Activated CD8-positive, alpha-beta memory T cell treated with anti-CD3 and anti-CD28 coated beads, Interleukin-2, amount 10 ng/mL, durations not matched to agents 7 days and 5 days (primary cell): ENCODE measurements at regions of chr9 and their contacts with region 1.

Region 1: DNA sequence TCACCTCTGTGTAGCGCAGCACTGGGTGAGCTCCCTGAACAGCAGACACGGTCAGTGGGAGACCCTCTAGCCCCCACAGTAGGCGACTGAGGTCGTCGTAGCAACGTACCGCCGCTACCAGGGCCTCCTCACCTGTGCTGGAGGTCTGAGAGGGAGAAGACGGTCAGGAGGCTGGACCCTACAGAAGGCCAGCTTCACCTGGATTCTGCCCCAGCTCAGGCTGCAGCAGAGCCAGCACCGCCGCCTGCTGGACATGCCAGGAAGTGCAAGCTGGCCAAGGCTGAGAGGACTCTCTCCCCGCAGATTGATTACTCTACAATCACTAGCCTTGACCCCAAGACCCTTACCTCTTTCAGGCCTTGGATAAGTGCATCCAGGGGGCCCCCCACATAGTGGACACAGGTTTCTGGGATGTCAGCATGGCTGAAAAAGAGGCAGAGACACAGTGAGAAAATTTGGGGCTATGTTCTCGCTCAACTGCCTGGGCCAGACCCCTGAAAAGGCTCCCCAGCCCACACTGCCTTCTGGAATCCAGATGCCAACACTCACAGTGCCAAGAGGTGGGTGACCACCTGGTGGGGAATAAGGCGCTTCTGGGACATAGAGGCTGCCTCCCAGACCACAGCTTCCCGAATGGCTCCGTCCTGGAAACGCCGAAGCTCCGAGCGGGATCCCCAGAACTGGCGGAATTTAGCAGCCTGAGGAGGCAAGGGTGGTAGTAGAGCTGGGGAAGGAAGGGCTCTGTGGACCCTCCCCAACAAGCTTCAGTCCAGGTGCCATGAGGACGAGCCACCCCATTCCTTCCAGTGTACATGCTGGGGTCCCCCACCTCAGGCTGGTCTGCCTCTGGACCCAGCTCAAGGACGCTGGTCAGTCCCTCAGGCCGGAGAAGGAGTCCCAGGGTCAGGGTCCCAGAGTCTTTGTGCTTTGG is 6.9 kb downstream of the NOL6 start:
- DNase-seq: peak; percentile 78
- ATAC-seq: peak; percentile 81
- H3K4me3 Mint-ChIP-seq: no peak overlapping the region
- H3K27ac Mint-ChIP-seq: no peak overlapping the region
- H3K4me1 Mint-ChIP-seq: peaks cover 8% of the 10 kb centered on the region
- H3K27me3 Mint-ChIP-seq: no peaks in the 10 kb centered on the region

Region 2: DNA sequence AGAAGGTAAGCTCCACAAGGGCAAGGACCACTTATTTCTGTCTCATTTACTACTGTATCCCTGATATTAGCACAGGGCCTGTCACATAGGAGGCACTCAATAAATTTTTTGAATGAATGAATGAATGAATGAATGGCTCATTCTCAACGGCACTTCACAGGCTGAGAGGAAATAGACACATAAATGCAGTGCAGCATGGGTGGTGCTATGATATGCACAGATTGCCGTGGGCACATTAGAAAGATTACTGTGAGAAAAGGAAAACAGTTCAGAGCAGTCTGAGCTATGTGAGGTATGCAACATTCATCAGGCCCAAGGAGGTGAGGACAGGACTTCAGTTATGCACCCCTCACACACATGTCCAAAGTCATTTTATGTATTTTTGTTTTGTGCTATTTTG is 13.3 kb after region 1 on chr9:
- CTCF ChIA-PET with region 1: interaction called, 14 read pairs
- DNase-seq: no peak
- ATAC-seq: no peak
- H3K4me3 Mint-ChIP-seq: no peak overlapping the region
- H3K27ac Mint-ChIP-seq: no peak overlapping the region
- H3K4me1 Mint-ChIP-seq: no peaks in the 10 kb centered on the region
- H3K27me3 Mint-ChIP-seq: no peaks in the 10 kb centered on the region

Region 3: GRCh38 chr9:33659921-33660320 is 193.1 kb after region 1 on chr9:
- CTCF ChIA-PET with region 1: no interaction called
- DNase-seq: no peak
- ATAC-seq: no peak
- H3K4me3 Mint-ChIP-seq: no peak overlapping the region
- H3K27ac Mint-ChIP-seq: no peak overlapping the region
- H3K4me1 Mint-ChIP-seq: no peaks in the 10 kb centered on the region
- H3K27me3 Mint-ChIP-seq: peaks cover 33% of the 10 kb centered on the region

Region 4: DNA sequence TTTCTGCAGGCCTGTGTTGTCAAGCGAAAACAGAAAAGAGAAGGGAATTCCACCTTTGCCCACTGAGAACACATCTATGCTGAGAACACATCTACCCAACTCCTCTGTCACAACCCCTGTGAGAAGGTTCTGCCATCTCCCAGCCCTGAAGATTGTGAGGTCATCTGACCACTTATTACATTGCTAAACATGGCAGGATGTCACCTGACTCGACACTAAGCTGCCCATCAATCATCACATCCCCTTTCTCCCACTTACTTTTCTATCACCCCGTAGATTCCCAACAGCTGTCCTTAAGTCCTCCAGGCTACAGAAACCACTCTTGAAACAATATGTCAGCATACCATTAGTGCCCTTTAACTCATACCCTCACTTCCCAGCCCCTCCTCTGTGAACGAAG is 264.3 kb after region 1 on chr9:
- CTCF ChIA-PET with region 1: no interaction called
- DNase-seq: no peak
- ATAC-seq: no peak
- H3K4me3 Mint-ChIP-seq: no peak overlapping the region
- H3K27ac Mint-ChIP-seq: no peak overlapping the region
- H3K4me1 Mint-ChIP-seq: no peaks in the 10 kb centered on the region
- H3K27me3 Mint-ChIP-seq: peaks cover 20% of the 10 kb centered on the region